ENCODE measurements at regions of chr5 and their contacts with region 1.

Region 1: DNA sequence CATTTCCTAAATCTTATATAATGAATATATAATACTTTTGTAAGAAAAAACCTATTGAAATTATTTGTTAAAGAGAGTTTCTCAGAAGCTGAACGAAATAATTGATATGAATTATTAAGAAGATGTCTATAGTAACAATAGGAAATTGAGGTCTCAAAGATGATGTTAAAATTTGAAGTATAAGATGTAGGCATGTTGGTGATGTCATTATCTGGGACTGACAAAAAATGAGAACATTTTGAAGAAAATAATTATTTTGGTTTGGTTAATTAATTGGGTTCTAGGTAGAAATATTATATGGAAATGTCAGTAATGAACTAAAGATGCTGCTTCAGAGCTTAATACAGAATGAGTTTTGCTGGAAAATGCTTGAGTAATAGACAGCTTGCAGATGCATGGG is 501.4 kb upstream of the ST8SIA4 start:
- DNase-seq: no peak
- H3K4me3 ChIP-seq: no peak overlapping the region
- H3K27ac ChIP-seq: no peak overlapping the region
- H3K4me1 ChIP-seq: no peaks in the 10 kb centered on the region
- H3K27me3 ChIP-seq: no peaks in the 10 kb centered on the region
- CTCF ChIP-seq: no peak
- POLR2A ChIP-seq: no peak

Region 2: GRCh38 chr5:101390151-101390908 is 14.2 kb before region 1 on chr5:
- CTCF ChIA-PET with region 1: interaction called, 17 read pairs
- POLR2A ChIA-PET with region 1: no interaction called
- dilution Hi-C with region 1: no loop called
- intact Hi-C with region 1: no loop called
- DNase-seq: peak; percentile 78
- H3K4me3 ChIP-seq: no peak overlapping the region
- H3K27ac ChIP-seq: no peak overlapping the region
- H3K4me1 ChIP-seq: no peaks in the 10 kb centered on the region
- H3K27me3 ChIP-seq: no peaks in the 10 kb centered on the region
- CTCF ChIP-seq: peak; percentile 49 to 60
- POLR2A ChIP-seq: no peak